Stomach (tissue), 19 donors: ENCODE measurements at regions of chr2 and their contacts with region 1.

Region 1: GRCh38 chr2:18749912-18750526 is 160.7 kb upstream of the NT5C1B start:
- DNase-seq: peak; percentile 62 to 89
- H3K4me3 ChIP-seq: no peak overlapping the region
- H3K27ac ChIP-seq: no peak overlapping the region
- H3K4me1 ChIP-seq: peaks cover 0 to 25% (median 11%) of the 10 kb centered on the region in 4 donors
- H3K27me3 ChIP-seq: no peaks in the 10 kb centered on the region
- CTCF ChIP-seq: peak in 5 of 7 experiments; percentile 52 to 79 (median 66)
- EP300 ChIP-seq: no peak
- POLR2A ChIP-seq: no peak

Region 2: DNA sequence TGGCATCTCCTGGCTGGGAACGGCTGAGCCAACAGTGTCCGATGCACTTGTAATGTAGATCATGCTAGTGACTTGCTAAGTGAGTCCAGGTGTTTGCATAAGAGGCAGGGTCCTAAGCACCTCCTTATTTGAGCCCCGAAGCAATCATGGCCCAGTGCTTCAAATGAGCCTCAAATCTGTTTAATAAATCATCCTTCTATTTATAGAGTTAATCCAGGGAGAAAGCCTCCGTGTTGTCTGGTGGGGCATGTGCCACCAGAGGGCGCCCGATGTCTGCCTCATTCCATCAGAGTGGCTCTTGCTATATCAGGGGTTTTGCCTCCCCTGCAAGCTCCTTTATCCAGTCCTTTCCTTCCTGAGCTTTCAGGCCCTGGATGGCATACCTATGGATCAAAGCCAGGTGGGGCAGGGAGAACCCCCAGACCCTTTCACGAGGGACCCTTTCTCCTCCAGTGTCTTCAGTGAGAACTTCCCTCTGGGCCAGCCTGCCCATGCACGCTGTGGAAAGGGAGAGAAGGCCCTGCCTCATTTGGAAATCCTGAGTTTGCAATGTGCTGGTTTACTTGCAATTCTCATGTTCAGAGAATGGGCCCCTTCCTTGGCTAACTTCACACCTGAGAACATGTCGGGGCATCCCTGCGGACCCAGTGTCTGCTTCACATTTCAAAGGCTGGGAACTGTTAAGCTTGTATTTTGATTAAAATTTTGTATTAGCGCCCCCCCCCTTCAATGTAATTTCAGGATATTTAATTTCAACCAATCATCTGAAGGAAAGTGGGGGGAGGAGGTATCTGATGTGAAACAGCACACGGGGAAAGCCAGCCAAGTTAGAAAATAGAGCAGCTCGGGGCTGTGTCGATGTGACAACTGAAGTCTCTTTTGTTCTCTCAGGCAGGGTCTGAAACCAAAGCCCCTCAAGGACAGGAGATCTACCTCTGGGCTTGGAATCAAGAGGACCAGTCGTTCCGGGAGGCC is 229.3 kb before region 1 on chr2:
- intact Hi-C with region 1: loop called (anchors 10 kb)
- DNase-seq: peak; percentile 84 to 95
- H3K4me3 ChIP-seq: no peak overlapping the region
- H3K27ac ChIP-seq: peak overlapping the region in 3 of 5 donors; percentile 43 to 69 (median 67)
- H3K4me1 ChIP-seq: peaks cover 0 to 48% (median 21%) of the 10 kb centered on the region in 4 donors
- H3K27me3 ChIP-seq: no peaks in the 10 kb centered on the region
- CTCF ChIP-seq: peak in 5 of 7 experiments; percentile 76 to 89 (median 87)
- EP300 ChIP-seq: no peak
- POLR2A ChIP-seq: no peak

Region 3: GRCh38 chr2:18614041-18614440 is 136.0 kb before region 1 on chr2:
- intact Hi-C with region 1: no loop called
- DNase-seq: peak in 1 of 2 donors; percentile 63
- H3K4me3 ChIP-seq: no peak overlapping the region
- H3K27ac ChIP-seq: no peak overlapping the region
- H3K4me1 ChIP-seq: peaks cover 0 to 26% (median 15%) of the 10 kb centered on the region in 4 donors
- H3K27me3 ChIP-seq: no peaks in the 10 kb centered on the region
- CTCF ChIP-seq: no peak
- EP300 ChIP-seq: no peak
- POLR2A ChIP-seq: no peak

Region 4: DNA sequence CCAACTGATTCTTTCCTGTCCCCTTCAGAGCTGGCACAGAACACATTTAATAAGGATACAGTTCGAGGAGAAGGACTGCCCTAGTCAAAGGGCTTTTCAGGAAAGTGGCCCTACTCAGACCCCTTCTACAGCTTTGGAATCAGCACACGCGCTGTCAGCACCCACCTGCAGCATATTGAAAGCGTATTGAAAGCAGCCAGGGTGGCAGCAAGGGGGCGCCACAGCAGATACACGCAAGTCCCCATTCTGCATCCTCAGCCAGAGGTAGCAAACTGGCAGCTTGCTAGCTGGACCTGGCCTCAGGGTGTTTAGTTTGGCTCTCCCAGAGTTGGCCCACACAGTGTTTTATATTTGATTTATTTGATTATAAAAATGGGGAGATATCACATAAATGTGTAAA is 59.7 kb before region 1 on chr2:
- intact Hi-C with region 1: no loop called
- DNase-seq: no peak
- H3K4me3 ChIP-seq: no peak overlapping the region
- H3K27ac ChIP-seq: no peak overlapping the region
- H3K4me1 ChIP-seq: no peaks in the 10 kb centered on the region
- H3K27me3 ChIP-seq: no peaks in the 10 kb centered on the region
- CTCF ChIP-seq: no peak
- EP300 ChIP-seq: no peak
- POLR2A ChIP-seq: no peak

Region 5: DNA sequence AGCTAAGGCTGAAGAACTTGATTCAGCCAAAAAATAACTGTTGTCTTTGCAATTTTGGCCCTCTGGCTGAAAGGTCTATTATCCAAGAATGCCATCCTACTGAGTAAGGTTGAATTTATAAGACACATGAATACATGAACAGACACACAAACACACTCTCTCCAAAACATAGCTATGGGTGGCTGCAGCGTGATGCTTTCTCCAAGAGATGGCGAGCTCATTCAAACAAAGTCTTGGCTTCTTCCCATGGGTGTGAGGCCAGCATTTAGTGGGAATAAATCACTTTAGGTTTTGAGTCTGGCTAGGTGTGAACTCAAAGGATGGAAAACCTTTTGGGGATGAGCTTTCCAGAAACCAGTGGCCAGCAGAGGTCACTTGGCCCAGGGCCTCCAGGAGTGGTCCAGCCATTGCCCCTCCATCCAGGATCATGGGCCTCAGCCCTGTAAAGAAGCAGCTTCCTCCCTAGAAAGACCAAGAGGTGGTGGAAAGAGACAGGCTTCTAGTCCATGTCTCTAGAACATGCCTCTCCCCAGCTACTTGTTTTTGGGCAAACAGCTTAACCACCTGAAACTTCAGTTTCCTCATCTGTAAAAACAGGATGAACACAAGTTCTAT is 619.4 kb after region 1 on chr2:
- intact Hi-C with region 1: loop called (anchors 5 kb)
- DNase-seq: peak in 1 of 2 donors; percentile 41
- H3K4me3 ChIP-seq: no peak overlapping the region
- H3K27ac ChIP-seq: no peak overlapping the region
- H3K4me1 ChIP-seq: no peaks in the 10 kb centered on the region
- H3K27me3 ChIP-seq: peaks cover 0 to 11% (median 5%) of the 10 kb centered on the region in 3 donors
- CTCF ChIP-seq: no peak
- EP300 ChIP-seq: no peak
- POLR2A ChIP-seq: no peak

Region 6: GRCh38 chr2:19863303-19864041 is 1113.5 kb after region 1 on chr2:
- intact Hi-C with region 1: loop called (anchors 5 kb)
- DNase-seq: peak; percentile 74 to 83
- H3K4me3 ChIP-seq: peak overlapping the region in 3 of 4 donors; percentile 5 to 25 (median 17)
- H3K27ac ChIP-seq: no peak overlapping the region
- H3K4me1 ChIP-seq: peaks cover 0 to 17% (median 11%) of the 10 kb centered on the region in 4 donors
- H3K27me3 ChIP-seq: peaks cover 0 to under 1% (median 0%) of the 10 kb centered on the region in 3 donors
- CTCF ChIP-seq: peak in 5 of 7 experiments; percentile 86 to 98 (median 94)
- EP300 ChIP-seq: no peak
- POLR2A ChIP-seq: no peak